ENCODE measurements at regions of chr19 and their contacts with region 1.

Region 1: DNA sequence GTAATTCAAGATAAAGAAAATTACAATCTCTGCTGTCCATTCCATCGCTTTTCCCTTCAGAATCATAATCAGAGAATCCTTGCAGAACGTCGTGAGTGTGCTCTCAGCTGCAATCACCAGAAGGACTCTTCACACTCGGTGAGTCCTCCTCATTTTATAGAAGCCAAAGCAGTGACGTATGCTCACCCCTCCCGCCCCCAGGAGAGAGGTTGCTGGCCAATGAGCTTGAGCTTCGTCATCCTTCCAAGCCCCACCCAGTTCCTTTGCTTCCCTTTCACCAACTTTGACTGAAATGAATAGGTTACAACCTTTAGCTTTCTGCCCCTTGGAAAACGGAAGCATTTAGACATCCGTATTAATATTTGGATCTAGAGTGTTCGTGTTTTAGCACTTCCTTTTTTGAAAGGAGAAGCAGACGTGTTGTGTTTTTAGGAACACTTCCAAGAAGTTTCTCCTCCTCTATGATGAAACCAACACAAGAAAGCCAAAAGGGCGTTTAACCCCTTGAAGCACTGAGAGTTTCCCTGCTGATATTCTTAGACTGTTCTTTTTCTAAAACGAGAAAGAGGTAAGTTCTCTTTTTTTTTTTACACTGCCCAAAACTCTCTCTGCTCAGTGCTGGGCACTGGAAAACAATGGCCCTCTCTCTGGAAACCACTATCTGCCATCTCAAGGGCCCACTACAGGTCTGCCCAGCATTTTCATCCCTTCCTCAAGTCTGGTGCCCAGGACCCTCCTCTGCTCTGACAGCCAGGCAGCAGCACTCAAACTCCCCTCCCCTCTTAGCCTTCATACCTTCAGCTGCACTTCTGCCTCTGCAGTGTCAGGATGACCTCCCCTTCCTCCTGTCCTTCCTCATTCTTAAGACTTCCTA is 44.3 kb upstream of the CEACAM21 start:
- DNase-seq: peak; percentile 80 to 93 (median 88)
- H3K4me3 ChIP-seq: peak overlapping the region; percentile 30 to 37
- H3K4me3 Mint-ChIP-seq: peak overlapping the region; percentile 77 to 88 (median 86)
- H3K27ac ChIP-seq: peak overlapping the region; percentile 53
- H3K27ac Mint-ChIP-seq: peak overlapping the region; percentile 82 to 98 (median 94)
- H3K4me1 ChIP-seq: peaks cover 53% of the 10 kb centered on the region
- H3K4me1 Mint-ChIP-seq: peaks cover 33 to 60% (median 49%) of the 10 kb centered on the region in 4 donors
- H3K27me3 ChIP-seq: no peaks in the 10 kb centered on the region
- H3K27me3 Mint-ChIP-seq: peaks cover 1 to 3% of the 10 kb centered on the region in 2 donors

Region 2: DNA sequence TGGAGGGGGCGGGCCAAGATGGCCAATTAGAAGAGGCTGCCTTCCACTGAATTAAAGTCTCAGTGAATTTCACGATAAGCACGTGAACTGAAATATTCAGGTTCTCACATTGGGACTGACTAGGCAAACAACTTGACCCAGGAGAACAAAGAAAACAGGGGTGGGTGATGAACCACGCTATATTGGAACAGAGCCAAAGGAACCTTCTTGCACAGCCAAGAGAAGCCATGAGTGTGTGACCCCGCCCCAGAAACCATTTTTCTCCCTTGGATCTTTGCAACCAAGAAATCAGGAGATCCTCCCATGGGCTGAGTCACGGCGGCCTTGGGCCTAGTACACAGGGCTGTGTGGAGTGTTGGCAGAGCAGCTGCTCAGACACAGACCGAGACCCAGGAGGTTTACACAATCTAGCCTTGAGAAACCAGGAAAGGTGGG is 51.9 kb before region 1 on chr19:
- CTCF ChIA-PET with region 1: no interaction called
- POLR2A ChIA-PET with region 1: no interaction called
- intact Hi-C with region 1: no loop called
- DNase-seq: no peak
- H3K4me3 ChIP-seq: no peak overlapping the region
- H3K4me3 Mint-ChIP-seq: no peak overlapping the region
- H3K27ac ChIP-seq: no peak overlapping the region
- H3K27ac Mint-ChIP-seq: no peak overlapping the region
- H3K4me1 ChIP-seq: no peaks in the 10 kb centered on the region
- H3K4me1 Mint-ChIP-seq: no peaks in the 10 kb centered on the region
- H3K27me3 ChIP-seq: no peaks in the 10 kb centered on the region
- H3K27me3 Mint-ChIP-seq: peaks cover 30 to 36% of the 10 kb centered on the region in 2 donors

Region 3: DNA sequence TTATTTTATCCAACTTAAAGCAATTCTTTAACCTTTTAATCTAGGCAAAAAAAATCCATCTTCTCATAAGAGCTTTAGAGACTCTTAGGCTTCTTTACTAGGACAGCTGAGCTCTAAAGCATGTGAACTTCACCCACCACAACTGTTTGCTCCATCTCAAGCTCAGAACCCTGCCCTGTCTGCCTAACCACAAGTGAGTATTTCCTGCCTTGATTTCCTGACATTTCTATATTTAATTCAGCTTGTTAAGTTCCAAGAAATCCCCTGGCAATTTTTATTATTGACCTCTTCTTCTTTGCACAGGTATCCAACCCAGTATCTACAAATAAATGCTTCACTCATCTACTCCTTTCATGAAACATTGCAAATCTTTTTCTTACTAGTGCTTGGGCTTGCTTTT is 23.2 kb after region 1 on chr19:
- CTCF ChIA-PET with region 1: interaction called, 561 read pairs
- POLR2A ChIA-PET with region 1: interaction called, 547 read pairs
- intact Hi-C with region 1: no loop called
- DNase-seq: peak; percentile 64 to 78 (median 66)
- H3K4me3 ChIP-seq: peak overlapping the region in 1 of 2 donors; percentile 37
- H3K4me3 Mint-ChIP-seq: peak overlapping the region; percentile 56 to 100 (median 98)
- H3K27ac ChIP-seq: peak overlapping the region; percentile 63
- H3K27ac Mint-ChIP-seq: peak overlapping the region; percentile 66 to 95 (median 88)
- H3K4me1 ChIP-seq: peaks cover 72% of the 10 kb centered on the region
- H3K4me1 Mint-ChIP-seq: peaks cover 45 to 84% (median 62%) of the 10 kb centered on the region in 4 donors
- H3K27me3 ChIP-seq: no peaks in the 10 kb centered on the region
- H3K27me3 Mint-ChIP-seq: no peaks in the 10 kb centered on the region

Region 4: DNA sequence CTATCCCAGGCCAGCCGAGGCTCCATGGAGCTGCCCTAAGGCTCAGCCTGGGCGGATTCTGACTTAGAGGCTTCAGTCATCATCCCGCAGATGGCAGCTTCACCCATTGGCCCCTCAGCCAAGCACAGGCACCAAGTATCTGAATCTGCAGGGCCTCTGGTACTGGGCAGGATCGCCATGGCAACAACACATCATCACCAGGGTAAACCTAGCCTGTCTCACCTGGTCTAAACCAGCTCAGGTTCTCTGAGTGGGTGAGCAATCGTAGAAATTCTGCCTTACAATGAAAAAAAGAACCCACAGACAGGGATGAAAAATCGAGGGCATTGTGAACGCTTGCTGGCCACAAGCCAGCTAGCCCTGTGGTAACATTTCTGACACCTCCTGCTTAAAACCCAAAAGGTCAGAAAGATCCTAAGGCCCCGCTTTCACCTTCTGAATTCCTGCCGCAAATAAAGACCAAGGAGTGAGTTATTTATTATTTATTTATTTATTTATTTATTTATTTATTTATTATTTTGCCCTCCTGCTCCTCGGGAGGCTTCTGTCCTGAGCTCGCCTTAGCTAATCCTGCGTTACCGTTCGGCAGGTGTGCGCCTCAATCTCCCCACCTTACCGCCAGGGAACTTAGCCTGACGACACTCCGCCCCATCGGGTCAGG is 32.3 kb after region 1 on chr19:
- CTCF ChIA-PET with region 1: interaction called, 561 read pairs
- POLR2A ChIA-PET with region 1: interaction called, 547 read pairs
- intact Hi-C with region 1: no loop called
- DNase-seq: peak in 4 of 5 donors; percentile 58 to 88 (median 66)
- H3K4me3 ChIP-seq: peak overlapping the region in 1 of 2 donors; percentile 36
- H3K4me3 Mint-ChIP-seq: peak overlapping the region; percentile 31 to 85 (median 70)
- H3K27ac ChIP-seq: peak overlapping the region; percentile 28
- H3K27ac Mint-ChIP-seq: peak overlapping the region in 6 of 7 donors; percentile 82 to 94 (median 88)
- H3K4me1 ChIP-seq: peaks cover 75% of the 10 kb centered on the region
- H3K4me1 Mint-ChIP-seq: peaks cover 54 to 91% (median 70%) of the 10 kb centered on the region in 4 donors
- H3K27me3 ChIP-seq: no peaks in the 10 kb centered on the region
- H3K27me3 Mint-ChIP-seq: no peaks in the 10 kb centered on the region

Region 5: GRCh38 chr19:41616792-41617621 is 85.3 kb after region 1 on chr19:
- CTCF ChIA-PET with region 1: no interaction called
- POLR2A ChIA-PET with region 1: no interaction called
- intact Hi-C with region 1: no loop called
- DNase-seq: no peak
- H3K4me3 ChIP-seq: no peak overlapping the region
- H3K4me3 Mint-ChIP-seq: no peak overlapping the region
- H3K27ac ChIP-seq: no peak overlapping the region
- H3K27ac Mint-ChIP-seq: peak overlapping the region in 1 of 7 donors; percentile 83
- H3K4me1 ChIP-seq: no peaks in the 10 kb centered on the region
- H3K4me1 Mint-ChIP-seq: no peaks in the 10 kb centered on the region
- H3K27me3 ChIP-seq: no peaks in the 10 kb centered on the region
- H3K27me3 Mint-ChIP-seq: peaks cover 10 to 31% of the 10 kb centered on the region in 2 donors

Measured in CD4-positive, alpha-beta memory T cell (primary cell).